Thyroid gland (tissue), 4 donors: ENCODE measurements at regions of chr17 and their contacts with region 1.

Region 1: DNA sequence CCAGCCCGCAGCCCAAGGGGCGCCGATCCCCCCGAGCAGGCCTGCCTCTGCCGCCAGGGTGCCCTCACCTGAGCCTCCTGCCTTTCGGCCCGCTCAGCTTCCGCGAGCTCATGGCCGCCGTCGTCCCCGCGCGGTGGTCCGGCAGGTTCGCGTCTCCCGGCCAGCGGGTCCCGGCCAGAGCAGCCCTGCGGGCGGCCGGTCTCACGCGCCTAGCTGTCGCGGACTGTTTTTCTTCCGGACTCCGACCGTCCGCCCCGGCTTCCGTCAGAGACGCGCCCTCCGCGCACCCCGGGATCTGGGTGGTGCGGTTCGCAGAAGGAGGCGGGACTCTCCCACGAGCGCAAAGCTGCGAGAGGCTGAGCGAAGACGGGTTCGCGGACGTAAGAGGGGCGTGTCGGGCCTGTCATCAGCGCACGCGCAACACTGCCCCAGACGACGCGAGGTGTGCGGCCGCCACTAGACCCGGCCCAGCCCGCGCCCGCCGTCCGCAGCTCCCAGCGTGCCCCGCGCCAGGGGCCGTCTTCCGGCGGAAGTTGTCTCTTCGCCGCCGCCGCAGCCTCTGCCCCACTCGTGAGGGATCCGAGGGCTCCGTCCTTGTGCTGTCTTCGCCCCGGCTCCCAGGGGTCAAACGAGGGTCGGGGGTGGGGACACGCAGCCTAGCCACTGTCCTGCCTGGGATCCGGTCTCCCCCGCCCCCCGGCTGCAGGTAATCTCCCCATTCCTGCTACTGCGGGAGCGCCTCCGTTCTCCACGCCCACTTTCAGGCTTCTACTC is at the start of gene INPP5K:
- DNase-seq: peak; percentile 98
- H3K4me3 ChIP-seq: peak within 1 kb of the TSS; percentile 85 to 92 (median 91)
- H3K27ac ChIP-seq: peak within 1 kb of the TSS; percentile 77 to 91 (median 82)
- H3K4me1 ChIP-seq: peaks cover 35 to 46% of the 10 kb centered on the region in 2 donors
- H3K27me3 ChIP-seq: no peaks in the 10 kb centered on the region
- CTCF ChIP-seq: peak in 1 of 6 experiments; percentile 24
- POLR2A ChIP-seq: peak; percentile 72 to 80
- total RNA-seq, gene INPP5K: 124 to 285 (median 158) TPM

Region 2: DNA sequence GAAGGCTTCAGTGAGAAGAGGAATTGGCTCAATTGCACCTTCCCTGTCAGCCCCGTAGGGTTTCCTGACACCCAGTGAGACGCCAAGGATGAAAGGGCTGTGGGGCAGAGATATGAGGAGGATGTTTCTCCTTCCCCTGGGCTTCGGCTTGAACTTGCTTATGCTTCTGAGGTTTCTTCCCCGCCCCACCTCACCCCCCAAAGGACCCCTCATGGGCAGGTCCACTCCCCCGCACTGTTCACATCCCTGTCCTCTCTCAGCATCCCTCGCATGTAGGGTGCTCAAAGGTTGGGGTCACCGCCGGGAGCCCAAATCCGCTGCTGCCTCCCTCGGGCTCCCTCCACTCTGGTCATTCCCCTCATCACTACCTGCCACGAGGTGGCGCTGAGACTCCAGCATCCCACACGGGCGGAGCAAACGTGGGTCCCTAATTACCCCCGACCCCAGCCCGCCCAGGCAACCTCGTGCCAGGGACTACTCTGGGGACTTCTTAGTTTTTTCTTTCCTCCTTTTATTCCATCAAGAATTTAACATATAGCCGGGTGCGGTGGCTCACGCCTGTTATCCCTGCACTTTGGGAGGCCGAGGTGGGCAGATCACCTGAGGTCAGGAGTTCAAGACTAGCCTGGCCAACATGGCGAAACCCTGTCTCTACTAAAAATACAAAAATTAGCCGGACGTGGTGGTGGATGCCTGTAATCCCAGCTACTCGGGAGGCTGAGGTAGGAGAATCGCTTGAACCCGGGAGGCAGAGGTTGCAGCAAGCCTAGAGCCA is 240.4 kb before region 1 on chr17:
- intact Hi-C with region 1: loop called (anchors 10 kb)
- DNase-seq: peak; percentile 57 to 68
- H3K4me3 ChIP-seq: no peak overlapping the region
- H3K27ac ChIP-seq: no peak overlapping the region
- H3K4me1 ChIP-seq: no peaks in the 10 kb centered on the region
- H3K27me3 ChIP-seq: no peaks in the 10 kb centered on the region
- CTCF ChIP-seq: peak; percentile 59 to 89 (median 69)
- POLR2A ChIP-seq: no peak

Region 3: GRCh38 chr17:1365445-1366039 is 151.0 kb before region 1 on chr17:
- intact Hi-C with region 1: loop called (anchors 5 kb)
- DNase-seq: peak; percentile 47 to 57
- H3K4me3 ChIP-seq: no peak overlapping the region
- H3K27ac ChIP-seq: peak overlapping the region in 2 of 3 donors; percentile 54 to 56
- H3K4me1 ChIP-seq: peaks cover 14 to 44% of the 10 kb centered on the region in 2 donors
- H3K27me3 ChIP-seq: no peaks in the 10 kb centered on the region
- CTCF ChIP-seq: peak; percentile 74 to 87 (median 82)
- POLR2A ChIP-seq: no peak

Region 4: DNA sequence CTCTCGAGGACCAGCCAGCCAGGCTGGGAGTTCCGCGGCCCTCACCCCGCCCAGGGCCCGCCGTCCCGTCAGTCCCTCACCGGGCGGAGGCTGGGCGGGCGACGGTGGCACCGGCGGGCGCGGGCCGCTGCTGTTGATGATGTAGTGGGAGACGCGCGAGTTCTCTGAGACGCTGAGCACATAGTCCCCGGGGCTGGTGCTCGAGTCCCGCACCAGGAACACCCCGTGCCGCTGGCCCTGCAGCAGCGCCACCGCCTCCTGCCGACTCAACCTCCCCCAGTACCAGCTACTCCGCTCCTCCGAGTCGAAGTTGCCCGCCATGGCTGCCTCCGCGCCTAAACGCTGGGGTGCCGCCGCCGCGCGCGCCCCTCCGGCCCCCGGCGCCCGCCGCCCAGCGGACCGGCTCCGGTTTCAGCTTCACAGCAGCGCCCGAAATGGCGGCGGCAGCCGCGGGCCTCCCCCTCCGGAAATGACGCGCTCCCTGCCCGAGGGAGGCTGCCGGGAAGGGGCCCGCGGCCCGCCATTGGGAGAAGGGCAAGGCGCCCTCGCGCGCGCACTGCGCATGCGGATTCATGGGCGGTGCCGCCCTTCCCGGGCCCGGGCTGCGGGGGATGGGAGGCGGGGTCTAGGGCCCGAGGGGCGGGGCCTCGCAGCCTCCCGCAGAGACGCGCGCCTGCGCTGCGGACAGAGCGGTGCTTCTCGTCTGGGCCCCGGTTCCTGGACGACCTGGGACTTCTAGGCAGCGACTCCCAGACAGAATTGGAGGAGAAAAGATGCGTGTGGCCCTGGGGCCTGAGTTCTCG is 60.6 kb before region 1 on chr17 and contains the start of gene CRK:
- intact Hi-C with region 1: loop called (anchors 5 kb)
- DNase-seq: peak; percentile 96 to 97
- H3K4me3 ChIP-seq: peak within 1 kb of the TSS; percentile 85 to 100 (median 95)
- H3K27ac ChIP-seq: peak within 1 kb of the TSS; percentile 81 to 98 (median 96)
- H3K4me1 ChIP-seq: peaks cover 40 to 53% of the 10 kb centered on the region in 2 donors
- H3K27me3 ChIP-seq: no peaks in the 10 kb centered on the region
- CTCF ChIP-seq: peak in 1 of 6 experiments; percentile 13
- POLR2A ChIP-seq: peak; percentile 75 to 95
- total RNA-seq, gene CRK: 89.6 to 140 (median 98.7) TPM

Region 5: GRCh38 chr17:1555651-1556471 is 39.3 kb after region 1 on chr17:
- intact Hi-C with region 1: loop called (anchors 5 kb)
- DNase-seq: peak; percentile 69 to 81
- H3K4me3 ChIP-seq: no peak overlapping the region
- H3K27ac ChIP-seq: peak overlapping the region in 2 of 3 donors; percentile 24 to 56
- H3K4me1 ChIP-seq: peaks cover 46 to 59% of the 10 kb centered on the region in 2 donors
- H3K27me3 ChIP-seq: no peaks in the 10 kb centered on the region
- CTCF ChIP-seq: no peak
- POLR2A ChIP-seq: no peak